Pancreas (tissue), 10 donors: ENCODE measurements at regions of chr14 and their contacts with region 1.

Region 1: DNA sequence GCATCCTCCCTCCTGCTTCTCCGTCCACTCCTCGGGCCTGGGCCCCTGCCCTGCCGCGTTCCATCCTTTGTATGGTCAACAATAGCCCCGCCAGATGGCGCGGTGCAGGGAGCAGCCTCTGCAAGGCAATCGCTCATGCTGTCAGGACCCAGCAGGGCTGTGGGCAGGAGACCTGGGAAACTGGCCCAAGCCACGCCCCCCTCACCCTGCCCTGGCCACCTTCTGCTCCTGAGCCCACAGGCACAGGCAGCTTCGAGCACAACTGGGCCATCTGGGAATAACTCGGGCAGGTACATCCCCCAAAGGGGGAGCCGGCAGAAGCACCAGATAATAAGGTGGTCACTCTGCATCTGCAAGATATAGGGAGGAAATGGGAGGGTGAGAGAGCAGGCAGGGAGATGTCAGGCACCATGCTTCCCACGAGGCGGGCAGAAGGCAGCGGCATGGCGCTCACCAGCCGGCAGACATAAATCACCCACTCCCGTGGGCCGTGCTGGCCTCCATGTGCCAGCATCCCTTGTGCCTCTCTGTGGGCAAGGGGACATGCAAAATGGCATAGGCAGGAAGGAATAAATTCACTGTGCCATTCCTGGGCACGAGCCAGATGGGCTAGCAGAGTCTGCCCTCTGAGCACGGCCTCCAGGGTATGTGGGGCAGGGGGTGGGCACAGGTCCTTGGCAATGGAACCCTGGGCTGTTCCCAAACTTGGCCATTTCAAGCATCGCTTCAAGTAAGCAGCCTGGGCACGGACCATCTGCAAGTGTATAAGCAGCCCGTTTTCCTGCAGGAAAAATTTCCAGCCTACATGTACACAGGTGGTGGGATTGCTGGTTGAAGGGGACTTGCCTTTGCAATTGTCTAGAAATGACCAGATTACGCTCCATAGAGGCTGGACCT is 40.5 kb downstream of the CCDC85C start:
- DNase-seq: peak; percentile 92 to 98 (median 94)
- ATAC-seq: peak; percentile 85 to 89 (median 86)
- H3K4me3 ChIP-seq: no peak overlapping the region
- H3K27ac ChIP-seq: peak overlapping the region in 3 of 4 donors; percentile 6 to 85 (median 80)
- H3K4me1 ChIP-seq: peaks cover 48 to 72% (median 55%) of the 10 kb centered on the region in 3 donors
- H3K27me3 ChIP-seq: no peaks in the 10 kb centered on the region
- CTCF ChIP-seq: peak in 3 of 4 donors; percentile 10 to 31 (median 27)

Region 2: DNA sequence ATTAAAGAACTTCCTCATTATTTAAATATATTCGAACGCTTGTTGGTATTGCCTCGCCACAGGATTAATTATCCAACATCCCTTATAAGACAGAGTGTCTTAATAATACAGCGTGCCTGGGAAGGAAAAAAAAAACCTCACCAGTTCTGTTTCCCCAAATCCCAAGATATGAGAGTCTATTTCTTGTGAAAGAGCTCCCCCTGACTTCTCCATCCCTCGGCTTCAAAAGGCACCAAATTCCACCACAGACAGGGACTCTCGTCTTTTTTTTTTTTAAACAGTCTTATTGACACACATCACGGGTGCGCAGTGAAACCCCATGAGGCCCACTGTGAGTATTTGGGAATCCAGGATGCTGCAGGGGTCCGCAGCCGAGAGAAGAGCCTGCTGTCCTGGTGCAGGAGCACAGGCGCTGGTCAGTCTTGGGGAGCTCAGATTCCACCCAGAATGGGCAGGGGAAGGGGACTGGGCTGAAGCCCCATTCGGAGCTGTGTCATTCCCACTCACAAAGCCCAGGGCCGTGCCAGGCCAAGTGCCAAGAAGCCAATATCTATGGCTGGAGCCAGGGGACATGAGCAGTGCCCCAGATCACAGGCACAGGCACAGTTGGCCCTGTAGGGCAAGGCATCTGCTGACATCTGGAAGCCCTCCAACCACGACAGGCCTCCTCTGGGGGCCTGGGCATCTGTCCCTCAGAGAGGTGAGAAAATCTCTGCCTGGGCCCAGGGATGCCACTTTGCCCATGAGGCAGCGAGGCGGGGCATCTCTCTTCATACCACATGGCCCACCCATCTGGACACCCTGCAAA is 363.4 kb before region 1 on chr14:
- intact Hi-C with region 1: no loop called
- DNase-seq: no peak
- ATAC-seq: no peak
- H3K4me3 ChIP-seq: no peak overlapping the region
- H3K27ac ChIP-seq: no peak overlapping the region
- H3K4me1 ChIP-seq: no peaks in the 10 kb centered on the region
- H3K27me3 ChIP-seq: no peaks in the 10 kb centered on the region
- CTCF ChIP-seq: no peak

Region 3: GRCh38 chr14:99348816-99349614 is 214.5 kb before region 1 on chr14:
- intact Hi-C with region 1: no loop called
- DNase-seq: peak in 4 of 6 donors; percentile 57 to 77 (median 73)
- ATAC-seq: peak; percentile 46 to 73 (median 57)
- H3K4me3 ChIP-seq: no peak overlapping the region
- H3K27ac ChIP-seq: no peak overlapping the region
- H3K4me1 ChIP-seq: peaks cover 0 to 7% (median 6%) of the 10 kb centered on the region in 3 donors
- H3K27me3 ChIP-seq: no peaks in the 10 kb centered on the region
- CTCF ChIP-seq: no peak

Region 4: GRCh38 chr14:99595034-99595433 is 31.6 kb after region 1 on chr14:
- intact Hi-C with region 1: loop called in 2 of 3 experiments (anchors 5 kb)
- DNase-seq: no peak
- ATAC-seq: no peak
- H3K4me3 ChIP-seq: no peak overlapping the region
- H3K27ac ChIP-seq: no peak overlapping the region
- H3K4me1 ChIP-seq: peaks cover 27 to 41% (median 30%) of the 10 kb centered on the region in 3 donors
- H3K27me3 ChIP-seq: no peaks in the 10 kb centered on the region
- CTCF ChIP-seq: no peak

Region 5: GRCh38 chr14:99604283-99604765 is 40.8 kb after region 1 on chr14:
- intact Hi-C with region 1: loop called in 2 of 3 experiments (anchors 5 kb)
- DNase-seq: peak; percentile 93 to 99 (median 98)
- ATAC-seq: peak; percentile 85 to 93 (median 90)
- H3K4me3 ChIP-seq: peak overlapping the region; percentile 65 to 89 (median 76)
- H3K27ac ChIP-seq: peak overlapping the region; percentile 86 to 95 (median 90)
- H3K4me1 ChIP-seq: peaks cover 20 to 26% (median 23%) of the 10 kb centered on the region in 3 donors
- H3K27me3 ChIP-seq: no peaks in the 10 kb centered on the region
- CTCF ChIP-seq: no peak